K562 (cell line): ENCODE measurements at regions of chr14 and their contacts with region 1.

Region 1: GRCh38 chr14:21997300-21997699 is 323.7 kb upstream of the OR4E1 start:
- DNase-seq: peak in 1 of 4 experiments; percentile 5
- ATAC-seq: peak; percentile 68; the same call in 2 of the 3 replicates
- H3K4me3 ChIP-seq: no peak overlapping the region
- H3K27ac ChIP-seq: no peak overlapping the region
- H3K4me1 ChIP-seq: no peaks in the 10 kb centered on the region
- H3K27me3 ChIP-seq: no peaks in the 10 kb centered on the region
- CTCF ChIP-seq: peak in 2 of 3 experiments; percentile 13 to 16; a peak in 1 of 6 replicates
- EP300 ChIP-seq: no peak
- POLR2A ChIP-seq: no peak
- RAD21 ChIP-seq: no peak

Region 2: DNA sequence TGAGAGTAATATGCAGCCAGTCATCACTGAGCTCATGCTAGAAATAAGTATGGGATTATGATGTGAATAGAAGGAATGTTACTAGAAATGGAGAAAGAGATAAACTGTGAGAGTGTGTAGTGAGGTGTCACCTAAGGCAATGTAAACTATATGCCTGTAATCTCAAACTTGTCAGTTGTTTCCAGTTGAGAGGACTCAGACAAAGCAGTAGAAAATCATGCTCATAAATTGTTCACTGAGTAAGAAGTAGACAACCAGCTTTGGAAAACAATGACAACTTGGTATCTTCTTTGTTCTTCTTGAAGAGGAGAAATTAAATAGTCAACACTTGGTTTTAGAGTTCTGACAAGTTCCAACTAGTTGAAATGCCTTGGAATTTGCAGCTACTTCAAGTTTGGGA is 175.2 kb before region 1 on chr14:
- CTCF ChIA-PET with region 1: no interaction called
- POLR2A ChIA-PET with region 1: no interaction called
- in situ Hi-C with region 1: no loop called
- intact Hi-C with region 1: no loop called
- DNase-seq: no peak
- ATAC-seq: no peak
- H3K4me3 ChIP-seq: no peak overlapping the region
- H3K27ac ChIP-seq: no peak overlapping the region
- H3K4me1 ChIP-seq: no peaks in the 10 kb centered on the region
- H3K27me3 ChIP-seq: no peaks in the 10 kb centered on the region
- CTCF ChIP-seq: no peak
- EP300 ChIP-seq: no peak
- POLR2A ChIP-seq: no peak
- RAD21 ChIP-seq: no peak

Region 3: GRCh38 chr14:21978184-21978998 is 18.9 kb before region 1 on chr14:
- CTCF ChIA-PET with region 1: no interaction called
- POLR2A ChIA-PET with region 1: no interaction called
- in situ Hi-C with region 1: no loop called
- intact Hi-C with region 1: no loop called
- DNase-seq: peak; percentile 42 to 47 (median 44)
- ATAC-seq: peak; percentile 69
- H3K4me3 ChIP-seq: no peak overlapping the region
- H3K27ac ChIP-seq: no peak overlapping the region
- H3K4me1 ChIP-seq: no peaks in the 10 kb centered on the region
- H3K27me3 ChIP-seq: no peaks in the 10 kb centered on the region
- CTCF ChIP-seq: peak; percentile 54 to 83 (median 68); a peak in 5 of 6 replicates
- EP300 ChIP-seq: no peak
- POLR2A ChIP-seq: no peak
- RAD21 ChIP-seq: peak in 1 of 2 experiments; percentile 30; a peak in 1 of 4 replicates

Region 4: DNA sequence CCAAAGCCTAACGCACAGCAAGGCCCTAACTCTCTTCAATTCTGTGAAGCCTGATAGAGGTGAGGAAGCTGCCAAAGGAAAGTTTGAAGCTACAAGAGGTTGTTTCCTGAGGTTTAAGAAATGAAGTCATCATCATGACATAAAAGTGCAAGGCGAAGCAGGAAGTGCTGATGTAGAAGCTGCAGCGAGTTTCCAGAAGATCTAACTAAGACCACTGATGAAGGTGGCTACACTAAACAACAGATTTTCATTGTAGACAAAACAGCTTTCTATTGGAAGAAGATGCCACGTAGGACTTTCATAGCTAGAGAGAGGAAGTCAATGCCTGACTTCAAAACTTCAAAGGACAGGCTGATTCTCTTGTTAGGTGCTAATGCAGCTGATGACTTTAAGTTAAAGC is 61.9 kb after region 1 on chr14:
- CTCF ChIA-PET with region 1: no interaction called
- POLR2A ChIA-PET with region 1: no interaction called
- in situ Hi-C with region 1: no loop called
- intact Hi-C with region 1: no loop called
- DNase-seq: no peak
- ATAC-seq: no peak
- H3K4me3 ChIP-seq: no peak overlapping the region
- H3K27ac ChIP-seq: no peak overlapping the region
- H3K4me1 ChIP-seq: no peaks in the 10 kb centered on the region
- H3K27me3 ChIP-seq: no peaks in the 10 kb centered on the region
- CTCF ChIP-seq: no peak
- EP300 ChIP-seq: no peak
- POLR2A ChIP-seq: no peak
- RAD21 ChIP-seq: no peak

Region 5: GRCh38 chr14:22099942-22100763 is 102.9 kb after region 1 on chr14:
- CTCF ChIA-PET with region 1: interaction called, 5 read pairs
- POLR2A ChIA-PET with region 1: no interaction called
- in situ Hi-C with region 1: no loop called
- intact Hi-C with region 1: loop called (anchors 10 kb)
- DNase-seq: peak in 3 of 4 experiments; percentile 5 to 53 (median 17)
- ATAC-seq: peak; percentile 94
- H3K4me3 ChIP-seq: no peak overlapping the region
- H3K27ac ChIP-seq: no peak overlapping the region
- H3K4me1 ChIP-seq: no peaks in the 10 kb centered on the region
- H3K27me3 ChIP-seq: no peaks in the 10 kb centered on the region
- CTCF ChIP-seq: peak; percentile 59 to 98 (median 84)
- EP300 ChIP-seq: no peak
- POLR2A ChIP-seq: no peak
- RAD21 ChIP-seq: peak; percentile 17 to 43; a peak in 2 of 4 replicates